ENCODE measurements at regions of chr6 and their contacts with region 1.

Region 1: DNA sequence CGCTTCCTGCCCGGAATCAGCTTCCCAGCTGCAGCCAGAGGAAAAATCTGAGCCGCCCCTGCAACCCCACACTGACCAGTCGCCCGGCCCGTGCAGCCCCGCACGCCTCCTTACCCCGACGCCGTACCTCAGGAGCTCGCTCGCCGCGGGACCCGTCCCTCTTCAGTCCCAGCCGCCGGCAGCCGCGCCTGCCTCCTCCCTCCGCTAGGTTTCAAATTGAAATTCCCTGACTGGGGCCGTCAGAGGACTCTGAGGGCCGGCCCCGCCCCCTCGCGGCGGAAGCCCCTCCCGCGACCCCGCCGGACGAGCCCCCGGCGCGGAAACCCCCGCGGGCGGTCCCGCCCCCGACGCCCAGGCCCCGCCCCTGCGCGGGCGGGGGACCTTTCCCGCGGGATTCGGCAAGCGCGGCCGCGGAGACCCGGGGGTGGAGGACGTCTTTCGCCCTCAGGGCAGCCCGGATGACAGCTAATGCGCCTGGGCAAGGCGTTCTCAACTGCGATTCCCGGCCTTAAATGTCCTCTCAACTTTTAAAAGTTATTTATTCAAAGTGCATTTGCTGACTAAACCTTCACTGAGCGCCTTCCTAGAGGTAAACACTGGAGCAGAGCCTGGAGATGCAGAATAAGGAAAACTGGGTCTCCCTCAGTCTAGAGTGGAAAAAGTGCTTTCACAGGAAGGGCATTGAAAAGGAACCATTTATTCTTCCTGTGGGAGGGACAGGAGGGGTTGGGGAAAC is at the start of gene EPB41L2:
- DNase-seq: peak; percentile 86
- ATAC-seq: peak; percentile 90
- H3K4me3 Mint-ChIP-seq: peak within 1 kb of the TSS; percentile 78
- H3K27ac Mint-ChIP-seq: peak within 1 kb of the TSS; percentile 76
- H3K4me1 Mint-ChIP-seq: peaks cover 28% of the 10 kb centered on the region
- H3K27me3 Mint-ChIP-seq: no peaks in the 10 kb centered on the region
- total RNA-seq, gene EPB41L2: 33.3 to 43.4 TPM

Region 2: DNA sequence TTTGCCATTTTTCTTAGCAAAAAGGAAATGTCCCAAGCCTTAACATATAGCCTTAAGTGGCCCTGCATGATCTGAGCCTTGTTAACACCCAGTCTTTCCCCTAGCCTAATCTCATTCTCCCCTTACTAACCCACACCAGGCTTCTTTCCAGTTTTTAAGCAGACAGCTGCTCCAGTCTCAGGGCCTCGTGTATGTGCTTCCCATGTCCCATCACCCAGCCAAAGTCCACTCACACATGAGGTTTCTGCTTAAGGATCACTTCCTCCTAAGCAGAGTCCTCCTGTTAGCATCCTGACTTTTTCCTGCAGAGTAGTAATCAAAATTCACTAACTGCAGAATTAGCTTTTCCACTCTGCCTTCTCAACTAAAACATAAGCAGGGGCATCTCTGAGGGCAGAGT is 139.8 kb before region 1 on chr6:
- CTCF ChIA-PET with region 1: no interaction called
- POLR2A ChIA-PET with region 1: no interaction called
- intact Hi-C with region 1: no loop called
- DNase-seq: no peak
- ATAC-seq: no peak
- H3K4me3 Mint-ChIP-seq: no peak overlapping the region
- H3K27ac Mint-ChIP-seq: no peak overlapping the region
- H3K4me1 Mint-ChIP-seq: no peaks in the 10 kb centered on the region
- H3K27me3 Mint-ChIP-seq: no peaks in the 10 kb centered on the region

Region 3: GRCh38 chr6:131135244-131136020 is 72.2 kb after region 1 on chr6 and contains the start of gene AKAP7:
- CTCF ChIA-PET with region 1: interaction called, 3 read pairs
- POLR2A ChIA-PET with region 1: no interaction called
- intact Hi-C with region 1: loop called (anchors 1 to 5 kb)
- DNase-seq: peak; percentile 76
- ATAC-seq: peak; percentile 81
- H3K4me3 Mint-ChIP-seq: peak within 1 kb of the TSS; percentile 91
- H3K27ac Mint-ChIP-seq: peak within 1 kb of the TSS; percentile 97
- H3K4me1 Mint-ChIP-seq: peaks cover 12% of the 10 kb centered on the region
- H3K27me3 Mint-ChIP-seq: no peaks in the 10 kb centered on the region
- total RNA-seq, gene AKAP7: 5.1 to 6.0 TPM

Measured in activated CD4-positive, alpha-beta T cell treated with anti-CD3 and anti-CD28 coated beads for 36 hours (primary cell).